ENCODE measurements at regions of chr15 and their contacts with region 1.

Region 1: GRCh38 chr15:56906771-56907170 is 11.7 kb upstream of the TCF12 start:
- DNase-seq: no peak
- ATAC-seq: no peak
- H3K4me3 ChIP-seq: no peak overlapping the region
- H3K4me3 Mint-ChIP-seq: peak overlapping the region; percentile 85
- H3K27ac ChIP-seq: no peak overlapping the region
- H3K27ac Mint-ChIP-seq: peak overlapping the region; percentile 11 to 69
- H3K4me1 ChIP-seq: no peaks in the 10 kb centered on the region
- H3K4me1 Mint-ChIP-seq: peaks cover 9 to 13% of the 10 kb centered on the region in 2 donors
- H3K27me3 ChIP-seq: no peaks in the 10 kb centered on the region
- H3K27me3 Mint-ChIP-seq: no peaks in the 10 kb centered on the region
- CTCF ChIP-seq: no peak

Region 2: DNA sequence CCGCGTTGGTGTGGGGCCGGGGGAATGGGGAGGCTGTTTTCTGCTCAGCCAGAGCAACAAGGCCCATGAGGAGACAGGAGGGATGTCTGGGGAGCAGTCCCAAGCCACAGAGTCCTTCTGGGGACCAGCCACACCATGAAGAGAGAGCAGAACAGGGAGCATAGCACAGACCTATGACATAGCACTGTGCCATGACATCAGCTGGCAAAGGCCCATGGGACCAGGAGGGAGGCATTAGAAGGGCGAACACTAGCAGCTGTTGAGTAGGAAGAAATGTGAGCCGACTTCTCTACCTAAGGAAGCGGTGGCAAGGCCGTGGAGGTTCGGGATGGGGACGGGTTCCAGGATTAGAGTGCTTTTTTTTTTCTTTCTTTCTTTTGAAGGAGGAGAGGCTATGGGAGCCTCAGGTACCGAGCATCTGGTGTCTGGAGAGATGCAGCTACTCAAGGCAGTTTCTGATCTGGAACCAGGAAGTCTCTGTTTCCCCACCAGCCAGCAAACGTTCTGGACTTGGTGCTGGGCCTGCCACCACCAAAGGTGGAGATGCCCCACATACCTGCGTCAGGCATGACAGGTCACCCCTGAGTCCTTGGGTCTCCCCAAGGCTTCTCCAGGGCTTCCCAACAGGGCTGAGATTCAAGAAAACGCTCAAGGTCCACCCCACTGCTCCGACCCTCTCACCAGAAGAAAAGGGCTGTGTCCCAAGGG is 392.2 kb after region 1 on chr15:
- intact Hi-C with region 1: loop called (anchors 10 kb)
- DNase-seq: no peak
- ATAC-seq: no peak
- H3K4me3 ChIP-seq: peak overlapping the region; percentile 59
- H3K4me3 Mint-ChIP-seq: no peak overlapping the region
- H3K27ac ChIP-seq: peak overlapping the region; percentile 91
- H3K27ac Mint-ChIP-seq: peak overlapping the region in 1 of 2 donors; percentile 78
- H3K4me1 ChIP-seq: peaks cover 15% of the 10 kb centered on the region
- H3K4me1 Mint-ChIP-seq: peaks cover 7 to 15% of the 10 kb centered on the region in 2 donors
- H3K27me3 ChIP-seq: no peaks in the 10 kb centered on the region
- H3K27me3 Mint-ChIP-seq: no peaks in the 10 kb centered on the region
- CTCF ChIP-seq: no peak